ENCODE measurements at regions of chr2 and their contacts with region 1.

Region 1: GRCh38 chr2:61789807-61790602 is 63.9 kb downstream of the FAM161A start:
- DNase-seq: no peak
- ATAC-seq: no peak
- H3K4me3 ChIP-seq: no peak overlapping the region
- H3K4me3 Mint-ChIP-seq: no peak overlapping the region
- H3K27ac ChIP-seq: no peak overlapping the region
- H3K27ac Mint-ChIP-seq: no peak overlapping the region
- H3K4me1 ChIP-seq: peaks cover 4% of the 10 kb centered on the region
- H3K4me1 Mint-ChIP-seq: peaks cover 4 to 6% of the 10 kb centered on the region in 2 donors
- H3K27me3 ChIP-seq: no peaks in the 10 kb centered on the region
- H3K27me3 Mint-ChIP-seq: peaks cover 0 to 8% of the 10 kb centered on the region in 2 donors
- CTCF ChIP-seq: no peak

Region 2: GRCh38 chr2:61426267-61426897 is 363.6 kb before region 1 on chr2:
- intact Hi-C with region 1: loop called (anchors 1 kb)
- DNase-seq: peak; percentile 71 to 87
- ATAC-seq: peak; percentile 90 to 95 (median 94)
- H3K4me3 ChIP-seq: no peak overlapping the region
- H3K4me3 Mint-ChIP-seq: no peak overlapping the region
- H3K27ac ChIP-seq: peak overlapping the region; percentile 76
- H3K27ac Mint-ChIP-seq: peak overlapping the region; percentile 74 to 88
- H3K4me1 ChIP-seq: peaks cover 32% of the 10 kb centered on the region
- H3K4me1 Mint-ChIP-seq: peaks cover 59 to 61% of the 10 kb centered on the region in 2 donors
- H3K27me3 ChIP-seq: no peaks in the 10 kb centered on the region
- H3K27me3 Mint-ChIP-seq: no peaks in the 10 kb centered on the region
- CTCF ChIP-seq: peak; percentile 74

Measured in natural killer cell (primary cell).